A549 (cell line): ENCODE measurements at regions of chr17 and their contacts with region 1.

Region 1: DNA sequence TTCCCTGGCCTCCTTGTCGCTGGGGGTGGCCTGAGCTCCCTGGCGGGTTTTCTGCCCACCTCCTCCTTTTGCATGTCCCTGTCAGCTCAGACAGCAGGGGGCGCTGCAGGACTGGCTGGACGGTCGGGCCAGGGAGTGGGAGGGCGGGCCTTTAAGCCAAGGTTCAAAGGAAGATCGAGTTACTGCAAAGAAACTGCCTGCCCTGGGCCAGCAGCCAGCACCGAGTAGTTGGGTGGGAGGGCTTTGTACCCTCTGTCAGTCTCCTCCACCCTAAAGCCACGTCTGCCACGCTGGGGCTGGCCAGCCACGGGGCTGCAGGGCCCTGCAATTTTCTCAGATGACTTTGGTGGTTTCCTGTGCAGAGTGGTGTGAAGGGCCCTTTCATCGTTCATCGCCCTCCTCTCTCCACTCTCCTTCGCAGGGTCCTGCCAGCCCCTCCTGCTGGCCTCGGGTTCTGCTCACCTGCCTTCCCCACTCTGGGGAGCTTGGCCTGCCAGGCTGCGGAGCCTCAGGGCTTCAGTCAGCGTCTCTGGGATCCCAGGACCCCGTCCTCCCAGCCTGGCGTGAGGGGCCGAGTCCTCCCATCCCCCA is 12.3 kb downstream of the GPR142 start:
- DNase-seq: peak; percentile 85 to 94
- ATAC-seq: peak; percentile 84 to 96
- H3K4me3 ChIP-seq: 0 out of 3 replicates have a peak overlapping the region, but pooled peaks have one; percentile 4
- H3K27ac ChIP-seq: peak overlapping the region; percentile 36 to 80; a peak in 5 of 6 replicates
- H3K4me1 ChIP-seq: peaks cover 14% of the 10 kb centered on the region
- CTCF ChIP-seq: peak; percentile 99
- EP300 ChIP-seq: no peak
- POLR2A ChIP-seq: no peak
- RAD21 ChIP-seq: peak; percentile 100

Region 2: DNA sequence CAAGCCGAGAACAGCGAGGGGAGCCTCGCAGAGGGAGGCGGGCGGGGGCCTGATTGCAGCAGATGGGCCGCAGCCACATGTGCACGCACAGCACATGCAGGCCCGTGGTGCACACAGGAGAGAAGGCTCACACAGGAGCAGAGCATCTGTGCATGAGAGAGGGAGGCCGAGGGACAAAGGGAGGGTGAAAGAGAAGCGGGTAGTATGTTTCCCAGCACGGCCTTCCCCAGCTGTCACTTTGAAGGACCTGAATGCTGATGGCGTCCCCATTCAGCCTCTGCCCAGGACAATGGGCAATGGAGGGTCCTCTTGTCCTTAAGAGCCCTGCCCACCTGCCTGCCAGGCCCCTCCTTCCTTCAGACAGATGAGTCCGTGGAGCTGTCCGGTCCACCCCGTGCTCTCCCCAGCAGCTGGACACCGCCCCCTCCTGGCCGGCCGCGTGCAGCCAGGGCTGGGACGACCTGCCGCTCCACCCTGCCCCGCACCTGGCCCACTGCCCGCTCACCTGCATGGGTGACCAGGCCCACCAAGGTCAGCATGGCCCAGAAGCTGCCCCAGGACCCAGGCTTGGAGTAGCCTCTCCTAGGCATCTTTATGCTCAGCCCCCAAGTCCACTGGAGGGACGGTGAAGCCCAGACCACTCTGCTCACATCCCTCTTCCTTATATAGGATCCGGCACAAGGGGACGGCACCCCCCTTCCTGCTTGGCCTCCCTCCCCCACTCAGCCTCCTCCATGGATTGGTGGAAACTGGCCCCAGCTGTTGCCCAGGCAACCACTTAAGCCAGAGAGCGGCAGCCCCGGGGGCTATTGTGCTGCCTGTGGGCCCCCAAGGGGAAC is 18.1 kb before region 1 on chr17 and contains the start of gene BTBD17:
- CTCF ChIA-PET with region 1: interaction called, 674 read pairs
- POLR2A ChIA-PET with region 1: no interaction called
- DNase-seq: peak; percentile 67 to 74
- ATAC-seq: peak; percentile 78 to 94
- H3K4me3 ChIP-seq: no peak within 1 kb of the TSS
- H3K27ac ChIP-seq: no peak within 1 kb of the TSS
- H3K4me1 ChIP-seq: peaks cover 8% of the 10 kb centered on the region; the same call in 1 of the 3 replicates
- CTCF ChIP-seq: peak; percentile 66
- EP300 ChIP-seq: no peak
- POLR2A ChIP-seq: no peak
- RAD21 ChIP-seq: peak; percentile 58 to 63
- polyA plus RNA-seq, gene BTBD17: not detected in 2 replicates

Region 3: DNA sequence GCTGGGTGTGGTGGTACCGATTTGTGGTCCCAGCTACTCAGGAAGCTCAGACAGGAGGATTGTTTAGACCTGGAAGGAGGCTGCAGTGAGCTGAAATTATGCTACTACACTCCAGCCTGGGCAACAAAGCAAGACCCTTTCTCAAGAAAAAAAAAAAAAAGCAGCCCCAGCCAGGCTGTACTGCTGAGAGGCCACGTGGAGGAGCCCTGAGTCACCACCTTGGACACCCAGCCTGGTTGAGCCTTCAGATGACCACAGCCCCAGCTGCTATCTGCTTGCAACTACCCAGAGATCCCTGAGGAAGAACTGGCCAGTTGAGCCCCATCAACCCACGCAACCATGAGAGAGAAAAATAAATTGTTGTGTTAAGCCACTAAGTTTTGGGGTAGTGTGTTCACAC is 28.7 kb after region 1 on chr17:
- CTCF ChIA-PET with region 1: interaction called, 138 read pairs
- POLR2A ChIA-PET with region 1: no interaction called
- DNase-seq: peak; percentile 75 to 78
- ATAC-seq: peak; percentile 94 to 97
- H3K4me3 ChIP-seq: no peak overlapping the region
- H3K27ac ChIP-seq: peak overlapping the region in 1 of 2 experiments; percentile 61; a peak in 3 of 6 replicates
- H3K4me1 ChIP-seq: peaks cover 15% of the 10 kb centered on the region
- CTCF ChIP-seq: peak; percentile 60
- EP300 ChIP-seq: no peak
- POLR2A ChIP-seq: no peak
- RAD21 ChIP-seq: peak; percentile 77 to 79

Region 4: DNA sequence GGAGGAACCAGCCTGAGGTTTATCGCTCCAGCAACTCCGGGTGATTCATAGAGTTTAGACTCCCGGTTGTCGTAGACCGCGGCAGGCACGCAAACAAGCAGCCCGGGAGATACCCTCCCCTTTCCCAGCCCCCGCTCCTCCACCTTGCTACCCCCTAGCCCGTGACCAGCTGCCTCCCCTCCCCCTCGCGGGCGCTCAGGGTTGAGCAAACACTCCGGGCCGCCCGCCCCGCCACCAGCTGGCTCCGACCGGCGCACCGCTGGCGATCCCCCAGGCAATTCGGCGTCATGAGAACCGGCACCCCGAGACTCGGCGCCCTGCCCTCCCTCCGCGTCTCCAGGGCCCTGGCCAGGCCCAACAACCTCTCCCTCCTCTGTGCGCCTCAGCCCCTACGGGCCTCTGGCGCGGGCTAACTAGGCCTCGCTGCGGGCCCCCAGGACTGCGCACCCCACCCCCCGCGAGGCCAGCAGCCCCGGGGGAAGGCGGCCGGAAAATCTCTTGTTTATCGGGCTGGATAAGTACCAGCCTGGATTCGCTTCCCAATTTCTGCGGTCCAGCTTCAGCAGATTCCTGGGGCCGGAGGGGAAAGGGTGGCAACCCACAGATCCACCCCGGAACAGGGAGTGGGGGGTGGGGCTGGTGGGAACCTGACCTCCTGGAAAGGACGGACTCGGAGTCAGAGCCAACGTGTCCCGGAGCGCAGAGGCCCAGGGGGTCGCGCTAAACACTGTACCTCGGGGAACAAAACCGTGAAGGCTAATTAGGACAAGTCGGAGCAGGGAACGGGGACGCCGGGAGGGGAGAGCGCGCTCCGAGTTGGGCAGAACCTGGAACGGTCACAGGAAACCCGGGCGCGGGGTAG is 51.3 kb after region 1 on chr17:
- CTCF ChIA-PET with region 1: interaction called, 45 read pairs
- POLR2A ChIA-PET with region 1: interaction called, 14 read pairs
- DNase-seq: peak; percentile 91 to 97
- ATAC-seq: peak; percentile 66 to 84
- H3K4me3 ChIP-seq: peak overlapping the region; percentile 78
- H3K27ac ChIP-seq: peak overlapping the region; percentile 95 to 99
- H3K4me1 ChIP-seq: peaks cover 42% of the 10 kb centered on the region
- CTCF ChIP-seq: no peak
- EP300 ChIP-seq: peak; percentile 39 to 71; a peak in 2 of 5 replicates
- POLR2A ChIP-seq: peak; percentile 9
- RAD21 ChIP-seq: no peak

Region 5: GRCh38 chr17:74446551-74447500 is 67.2 kb after region 1 on chr17:
- CTCF ChIA-PET with region 1: no interaction called
- POLR2A ChIA-PET with region 1: no interaction called
- DNase-seq: no peak
- ATAC-seq: no peak
- H3K4me3 ChIP-seq: no peak overlapping the region
- H3K27ac ChIP-seq: no peak overlapping the region
- H3K4me1 ChIP-seq: peaks cover 17% of the 10 kb centered on the region
- CTCF ChIP-seq: no peak
- EP300 ChIP-seq: no peak
- POLR2A ChIP-seq: no peak
- RAD21 ChIP-seq: no peak

Region 6: DNA sequence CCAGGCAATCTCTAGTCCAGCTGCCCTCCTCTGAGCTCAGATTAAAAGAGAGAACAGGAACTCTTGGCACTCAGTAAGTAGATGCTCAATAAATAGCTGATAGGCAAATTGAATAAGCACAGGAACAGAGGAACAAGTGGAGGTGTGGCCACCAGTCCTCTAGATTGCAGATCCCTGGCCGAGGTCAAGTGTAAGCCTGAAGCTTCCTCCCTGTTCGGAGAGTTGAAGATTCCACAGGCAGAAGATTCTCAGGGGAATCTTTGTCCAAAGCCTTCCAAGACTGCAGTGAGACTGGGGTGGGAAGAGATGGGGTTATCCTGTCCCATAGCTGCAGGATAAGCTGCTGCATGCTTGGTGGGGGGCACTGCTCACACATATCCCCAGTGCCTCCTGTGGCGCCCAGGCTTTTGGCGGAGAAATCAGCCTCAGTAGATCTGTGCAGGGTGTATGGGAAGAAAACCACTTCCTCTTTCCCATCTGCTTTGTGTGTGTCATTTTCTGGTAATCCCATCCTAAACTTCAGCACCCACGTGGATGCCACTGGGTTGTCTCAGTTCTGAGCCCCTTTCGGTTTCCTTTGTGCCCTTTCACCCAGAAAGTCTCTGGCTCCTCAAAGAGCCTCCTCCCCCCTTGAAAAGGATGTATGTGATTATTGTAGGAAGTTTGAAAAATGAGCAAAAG is 99.0 kb after region 1 on chr17:
- CTCF ChIA-PET with region 1: interaction called, 86 read pairs
- POLR2A ChIA-PET with region 1: no interaction called
- DNase-seq: no peak
- ATAC-seq: no peak
- H3K4me3 ChIP-seq: no peak overlapping the region
- H3K27ac ChIP-seq: no peak overlapping the region
- H3K4me1 ChIP-seq: no peaks in the 10 kb centered on the region
- CTCF ChIP-seq: no peak
- EP300 ChIP-seq: no peak
- POLR2A ChIP-seq: no peak
- RAD21 ChIP-seq: no peak

Region 7: DNA sequence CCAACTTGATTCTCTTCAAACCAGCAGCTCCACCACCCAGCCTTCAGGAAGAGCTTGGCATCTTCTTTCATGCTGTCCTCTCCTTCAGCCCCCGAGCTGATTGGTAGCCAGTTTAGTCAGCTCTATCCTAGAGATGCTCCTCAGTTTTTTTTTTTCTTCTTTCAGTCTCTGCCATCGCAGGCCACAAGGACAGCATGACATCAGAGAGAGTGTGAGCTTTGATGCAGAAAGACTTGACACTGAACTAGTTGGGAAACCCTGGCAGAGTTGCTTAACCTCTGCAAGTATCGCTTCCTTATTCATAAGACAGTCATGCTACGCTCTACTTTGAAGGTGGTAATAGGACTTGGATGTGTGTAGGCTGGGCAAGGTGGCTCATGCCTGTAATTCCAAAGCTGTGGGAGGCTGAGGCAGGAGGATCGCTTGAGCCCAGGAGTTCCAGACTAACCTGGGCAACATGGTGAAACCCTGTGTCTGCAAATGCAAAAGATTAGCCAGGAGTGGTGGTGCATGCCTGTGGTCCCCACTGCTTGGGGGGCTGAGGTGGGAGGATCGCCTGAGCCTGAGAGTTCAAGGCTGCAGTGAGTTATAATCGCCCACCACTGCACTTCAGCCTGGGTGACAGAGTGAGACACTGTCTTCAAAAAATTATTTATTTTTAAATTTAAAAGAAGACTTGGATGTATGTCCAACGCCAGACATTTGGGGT is 149.1 kb after region 1 on chr17:
- CTCF ChIA-PET with region 1: interaction called, 46 read pairs
- POLR2A ChIA-PET with region 1: no interaction called
- DNase-seq: no peak
- ATAC-seq: no peak
- H3K4me3 ChIP-seq: no peak overlapping the region
- H3K27ac ChIP-seq: no peak overlapping the region
- H3K4me1 ChIP-seq: no peaks in the 10 kb centered on the region
- CTCF ChIP-seq: no peak
- EP300 ChIP-seq: no peak
- POLR2A ChIP-seq: no peak
- RAD21 ChIP-seq: no peak